Motor neuron (in vitro differentiated cells): ENCODE measurements at regions of chr15 and their contacts with region 1.

Region 1: DNA sequence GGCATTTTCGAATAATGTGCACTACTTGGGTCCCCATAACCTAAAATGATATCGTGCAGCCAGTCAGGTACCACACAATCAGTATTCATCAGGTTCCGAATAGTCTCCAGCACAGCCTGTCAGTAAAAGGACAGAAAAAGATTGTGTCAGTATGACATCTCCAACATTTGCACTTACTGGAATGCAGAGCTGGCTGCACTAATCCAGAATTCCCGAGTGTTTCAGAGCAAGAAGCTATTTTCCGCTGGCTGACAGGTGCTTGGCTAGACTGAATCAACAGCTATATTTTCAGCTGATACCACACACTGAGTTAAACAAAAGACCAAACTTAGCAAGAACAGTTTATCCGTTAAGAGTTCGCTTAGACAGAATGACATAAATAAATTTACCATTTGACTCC is 68.8 kb downstream of the AQR start:
- ATAC-seq: no peak
- H3K4me3 ChIP-seq: no peak overlapping the region
- H3K27ac ChIP-seq: no peak overlapping the region
- H3K4me1 ChIP-seq: no peaks in the 10 kb centered on the region

Region 2: GRCh38 chr15:34084086-34084485 is 816.7 kb before region 1 on chr15:
- in situ Hi-C with region 1: loop called in 1 of 9 experiments (anchors 25 kb)
- ATAC-seq: peak in 2 of 8 experiments; percentile 25 to 79
- H3K4me3 ChIP-seq: no peak overlapping the region
- H3K27ac ChIP-seq: no peak overlapping the region
- H3K4me1 ChIP-seq: no peaks in the 10 kb centered on the region

Region 3: GRCh38 chr15:34616613-34617012 is 284.1 kb before region 1 on chr15:
- in situ Hi-C with region 1: loop called in 1 of 9 experiments (anchors 25 kb)
- ATAC-seq: peak in 5 of 8 experiments; percentile 42 to 91 (median 87)
- H3K4me3 ChIP-seq: no peak overlapping the region
- H3K27ac ChIP-seq: no peak overlapping the region
- H3K4me1 ChIP-seq: peaks cover 0 to 4% of the 10 kb centered on the region in 2 donors

Region 4: DNA sequence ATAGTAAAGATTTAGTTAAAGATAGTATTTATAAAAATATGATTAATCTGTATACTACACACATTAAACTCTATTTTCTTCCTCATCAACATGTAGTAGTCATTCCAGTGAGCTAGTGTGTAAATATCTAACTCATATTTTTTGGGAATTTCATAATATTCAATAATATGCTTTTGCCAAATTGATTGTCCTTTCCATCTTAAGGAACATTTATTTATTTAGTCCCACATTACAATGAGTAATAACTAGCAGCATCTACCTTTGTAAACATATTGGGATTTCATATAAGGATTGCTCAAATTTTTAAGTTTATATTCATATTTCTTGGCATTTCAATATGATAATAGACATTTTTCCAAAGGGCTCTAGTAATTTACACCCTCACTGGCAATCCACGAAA is 263.4 kb before region 1 on chr15:
- in situ Hi-C with region 1: no loop called
- ATAC-seq: no peak
- H3K4me3 ChIP-seq: no peak overlapping the region
- H3K27ac ChIP-seq: no peak overlapping the region
- H3K4me1 ChIP-seq: no peaks in the 10 kb centered on the region